Caco-2 (cell line): ENCODE measurements at regions of chr10 and their contacts with region 1.

Region 1: DNA sequence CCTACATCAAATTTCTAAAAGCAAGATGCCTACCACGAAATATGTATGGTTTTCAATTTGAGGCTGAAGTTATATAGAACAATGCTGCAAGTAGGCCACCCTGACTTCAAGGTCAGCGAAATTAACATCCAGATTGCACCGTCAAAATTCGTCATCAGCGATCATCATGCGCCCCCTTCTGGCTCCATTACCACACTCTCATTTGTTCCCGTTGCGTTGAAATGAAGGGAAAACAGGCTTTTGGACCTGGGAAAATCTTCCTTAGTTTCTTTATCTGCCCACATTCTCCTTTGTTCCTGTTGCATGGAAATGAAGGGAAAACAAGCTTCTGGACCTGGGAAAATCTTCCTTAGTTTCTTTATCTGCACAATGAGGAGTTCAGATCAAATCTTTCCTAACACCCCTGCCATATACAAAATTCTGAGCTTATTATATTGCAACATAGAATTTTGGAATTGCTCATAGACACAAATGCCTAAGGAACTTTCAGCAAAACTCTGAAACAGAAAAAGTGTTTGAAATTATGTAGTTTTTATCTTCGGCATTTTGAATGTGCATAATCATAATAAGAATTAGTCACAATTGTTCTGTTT is 98.2 kb upstream of the PRKCQ start:
- DNase-seq: peak; percentile 53 to 66
- H3K4me3 ChIP-seq: no peak overlapping the region
- H3K4me3 Mint-ChIP-seq: no peak overlapping the region
- H3K27ac Mint-ChIP-seq: no peak overlapping the region
- H3K4me1 ChIP-seq: no peaks in the 10 kb centered on the region
- H3K4me1 Mint-ChIP-seq: no peaks in the 10 kb centered on the region
- H3K27me3 ChIP-seq: no peaks in the 10 kb centered on the region
- H3K27me3 Mint-ChIP-seq: peaks cover 31% of the 10 kb centered on the region
- CTCF ChIP-seq: peak; percentile 89 to 91

Region 2: DNA sequence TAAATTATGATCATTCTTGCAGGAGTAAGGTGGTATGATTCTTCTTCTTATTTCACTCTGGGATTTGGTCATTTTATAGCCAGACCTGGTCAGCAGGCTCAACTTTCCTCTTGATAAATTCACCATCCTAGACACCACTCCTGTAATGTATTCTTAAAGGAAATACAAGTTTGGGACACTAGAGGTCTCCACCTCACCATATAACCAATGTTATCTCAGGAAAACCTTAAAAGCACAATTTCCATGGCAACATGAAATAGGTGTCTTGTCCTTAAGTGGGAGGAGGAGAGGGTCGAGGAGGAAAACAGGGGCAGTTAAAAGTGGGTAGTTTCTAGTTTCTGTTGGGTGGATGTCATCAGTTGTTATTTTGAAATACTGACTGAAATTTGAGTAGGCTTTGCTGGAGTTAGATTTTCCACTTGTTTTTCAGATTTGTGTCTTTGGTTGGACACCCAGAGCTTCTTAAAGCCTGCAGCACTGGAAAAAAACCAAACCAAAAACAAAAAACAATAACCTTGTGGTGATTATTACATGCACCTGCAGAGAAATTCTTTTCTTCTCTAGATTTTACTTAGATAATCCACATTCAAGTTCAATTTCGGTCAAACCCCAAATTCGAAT is 261.3 kb before region 1 on chr10:
- CTCF ChIA-PET with region 1: no interaction called
- POLR2A ChIA-PET with region 1: no interaction called
- intact Hi-C with region 1: loop called (anchors 1 kb)
- DNase-seq: peak in 1 of 2 experiments; percentile 68
- H3K4me3 ChIP-seq: no peak overlapping the region
- H3K4me3 Mint-ChIP-seq: no peak overlapping the region
- H3K27ac Mint-ChIP-seq: no peak overlapping the region
- H3K4me1 ChIP-seq: no peaks in the 10 kb centered on the region
- H3K4me1 Mint-ChIP-seq: no peaks in the 10 kb centered on the region
- H3K27me3 ChIP-seq: peaks cover 5% of the 10 kb centered on the region
- H3K27me3 Mint-ChIP-seq: peaks cover 14% of the 10 kb centered on the region
- CTCF ChIP-seq: peak in 1 of 2 experiments; percentile 81